ENCODE measurements at regions of chrX and their contacts with region 1.

Region 1: GRCh38 chrX:11143931-11144678 is 33.0 kb downstream of the HCCS start:
- DNase-seq: peak; percentile 80
- ATAC-seq: peak; percentile 82
- H3K4me3 ChIP-seq: no peak overlapping the region
- H3K4me3 Mint-ChIP-seq: no peak overlapping the region
- H3K27ac ChIP-seq: no peak overlapping the region
- H3K27ac Mint-ChIP-seq: no peak overlapping the region
- H3K4me1 ChIP-seq: no peaks in the 10 kb centered on the region
- H3K4me1 Mint-ChIP-seq: peaks cover 3% of the 10 kb centered on the region
- H3K27me3 ChIP-seq: peaks cover 0 to under 1% (median 0%) of the 10 kb centered on the region in 4 experiments
- H3K27me3 Mint-ChIP-seq: peaks cover 2% of the 10 kb centered on the region
- CTCF ChIP-seq: peak; percentile 61

Region 2: DNA sequence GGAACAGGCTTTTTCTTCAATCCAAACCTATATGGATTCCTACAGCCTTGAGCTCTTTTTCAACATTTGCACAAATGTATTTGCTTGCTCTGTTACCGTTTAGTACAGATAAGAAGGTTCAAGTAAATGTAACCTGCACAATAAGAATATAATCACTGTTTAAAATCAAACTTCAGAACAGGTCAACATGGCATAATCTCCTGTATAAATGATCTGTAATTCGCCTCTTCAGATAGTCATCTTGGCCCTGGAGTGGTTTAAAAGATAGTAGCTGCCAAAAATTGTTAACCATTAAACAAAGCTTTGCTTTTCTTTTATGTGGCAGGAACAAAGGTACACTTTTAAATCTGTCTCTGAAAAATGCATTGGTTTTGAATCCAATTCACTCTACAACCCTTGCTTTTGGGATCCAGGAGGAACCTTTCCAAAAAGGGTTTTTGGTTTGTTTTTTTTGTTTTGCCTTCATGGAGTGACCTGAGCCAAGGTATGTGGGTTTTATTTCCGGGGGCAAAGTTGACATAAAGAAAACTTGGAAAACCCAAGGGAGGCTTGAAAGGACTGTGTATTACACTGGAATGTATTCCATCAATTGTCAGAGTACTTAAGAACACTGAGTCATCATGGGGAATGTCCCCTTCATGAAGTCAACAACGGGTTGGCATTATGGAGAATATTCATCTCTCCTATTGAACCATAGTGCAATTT is 243.4 kb before region 1 on chrX:
- CTCF ChIA-PET with region 1: no interaction called
- POLR2A ChIA-PET with region 1: no interaction called
- intact Hi-C with region 1: no loop called
- DNase-seq: no peak
- ATAC-seq: no peak
- H3K4me3 ChIP-seq: no peak overlapping the region
- H3K4me3 Mint-ChIP-seq: no peak overlapping the region
- H3K27ac ChIP-seq: no peak overlapping the region
- H3K27ac Mint-ChIP-seq: no peak overlapping the region
- H3K4me1 ChIP-seq: no peaks in the 10 kb centered on the region
- H3K4me1 Mint-ChIP-seq: no peaks in the 10 kb centered on the region
- H3K27me3 ChIP-seq: no peaks in the 10 kb centered on the region
- H3K27me3 Mint-ChIP-seq: no peaks in the 10 kb centered on the region
- CTCF ChIP-seq: no peak

Region 3: GRCh38 chrX:11381464-11381863 is 237.4 kb after region 1 on chrX:
- CTCF ChIA-PET with region 1: no interaction called
- POLR2A ChIA-PET with region 1: no interaction called
- intact Hi-C with region 1: loop called (anchors 1 kb)
- DNase-seq: peak; percentile 64
- ATAC-seq: peak; percentile 79
- H3K4me3 ChIP-seq: no peak overlapping the region
- H3K4me3 Mint-ChIP-seq: no peak overlapping the region
- H3K27ac ChIP-seq: no peak overlapping the region
- H3K27ac Mint-ChIP-seq: no peak overlapping the region
- H3K4me1 ChIP-seq: no peaks in the 10 kb centered on the region
- H3K4me1 Mint-ChIP-seq: peaks cover 11% of the 10 kb centered on the region
- H3K27me3 ChIP-seq: peaks cover 0 to 3% (median 0%) of the 10 kb centered on the region in 4 experiments
- H3K27me3 Mint-ChIP-seq: peaks cover 9% of the 10 kb centered on the region
- CTCF ChIP-seq: peak; percentile 61

Region 4: GRCh38 chrX:11445540-11445939 is 301.4 kb after region 1 on chrX:
- CTCF ChIA-PET with region 1: no interaction called
- POLR2A ChIA-PET with region 1: no interaction called
- intact Hi-C with region 1: loop called (anchors 1 kb)
- DNase-seq: peak; percentile 19
- ATAC-seq: no peak
- H3K4me3 ChIP-seq: no peak overlapping the region
- H3K4me3 Mint-ChIP-seq: no peak overlapping the region
- H3K27ac ChIP-seq: no peak overlapping the region
- H3K27ac Mint-ChIP-seq: no peak overlapping the region
- H3K4me1 ChIP-seq: no peaks in the 10 kb centered on the region
- H3K4me1 Mint-ChIP-seq: no peaks in the 10 kb centered on the region
- H3K27me3 ChIP-seq: peaks cover 0 to 5% (median 0%) of the 10 kb centered on the region in 4 experiments
- H3K27me3 Mint-ChIP-seq: peaks cover 13% of the 10 kb centered on the region
- CTCF ChIP-seq: no peak

Region 5: GRCh38 chrX:11533211-11533651 is 389.1 kb after region 1 on chrX:
- CTCF ChIA-PET with region 1: interaction called, 6 read pairs
- POLR2A ChIA-PET with region 1: no interaction called
- intact Hi-C with region 1: loop called (anchors 1 kb)
- DNase-seq: peak; percentile 75
- ATAC-seq: peak; percentile 99
- H3K4me3 ChIP-seq: no peak overlapping the region
- H3K4me3 Mint-ChIP-seq: no peak overlapping the region
- H3K27ac ChIP-seq: no peak overlapping the region
- H3K27ac Mint-ChIP-seq: no peak overlapping the region
- H3K4me1 ChIP-seq: no peaks in the 10 kb centered on the region
- H3K4me1 Mint-ChIP-seq: peaks cover 2% of the 10 kb centered on the region
- H3K27me3 ChIP-seq: peaks cover 0 to 5% (median 0%) of the 10 kb centered on the region in 4 experiments
- H3K27me3 Mint-ChIP-seq: no peaks in the 10 kb centered on the region
- CTCF ChIP-seq: peak; percentile 90

Region 6: GRCh38 chrX:11724122-11725017 is 580.3 kb after region 1 on chrX:
- CTCF ChIA-PET with region 1: no interaction called
- POLR2A ChIA-PET with region 1: no interaction called
- intact Hi-C with region 1: loop called (anchors 2 kb)
- DNase-seq: peak; percentile 36
- ATAC-seq: peak; percentile 47
- H3K4me3 ChIP-seq: no peak overlapping the region
- H3K4me3 Mint-ChIP-seq: no peak overlapping the region
- H3K27ac ChIP-seq: no peak overlapping the region
- H3K27ac Mint-ChIP-seq: no peak overlapping the region
- H3K4me1 ChIP-seq: no peaks in the 10 kb centered on the region
- H3K4me1 Mint-ChIP-seq: no peaks in the 10 kb centered on the region
- H3K27me3 ChIP-seq: no peaks in the 10 kb centered on the region
- H3K27me3 Mint-ChIP-seq: peaks cover 10% of the 10 kb centered on the region
- CTCF ChIP-seq: peak; percentile 68

Region 7: GRCh38 chrX:11770320-11770719 is 626.2 kb after region 1 on chrX:
- CTCF ChIA-PET with region 1: interaction called, 3 read pairs
- POLR2A ChIA-PET with region 1: no interaction called
- intact Hi-C with region 1: loop called (anchors 2 kb)
- DNase-seq: peak; percentile 77
- ATAC-seq: peak; percentile 74
- H3K4me3 ChIP-seq: no peak overlapping the region
- H3K4me3 Mint-ChIP-seq: no peak overlapping the region
- H3K27ac ChIP-seq: no peak overlapping the region
- H3K27ac Mint-ChIP-seq: peak overlapping the region; percentile 61
- H3K4me1 ChIP-seq: peaks cover 4 to 17% of the 10 kb centered on the region in 2 donors
- H3K4me1 Mint-ChIP-seq: peaks cover 26% of the 10 kb centered on the region
- H3K27me3 ChIP-seq: no peaks in the 10 kb centered on the region
- H3K27me3 Mint-ChIP-seq: no peaks in the 10 kb centered on the region
- CTCF ChIP-seq: peak; percentile 81